Breast epithelium (tissue), 4 donors: ENCODE measurements at regions of chr7 and their contacts with region 1.

Region 1: GRCh38 chr7:119392-120163 is 72.8 kb upstream of the FAM20C start:
- DNase-seq: no peak
- H3K4me3 ChIP-seq: no peak overlapping the region
- H3K27ac ChIP-seq: peak overlapping the region; percentile 0 to 67
- H3K4me1 ChIP-seq: no peaks in the 10 kb centered on the region
- H3K27me3 ChIP-seq: no peaks in the 10 kb centered on the region
- CTCF ChIP-seq: no peak
- POLR2A ChIP-seq: no peak

Region 2: DNA sequence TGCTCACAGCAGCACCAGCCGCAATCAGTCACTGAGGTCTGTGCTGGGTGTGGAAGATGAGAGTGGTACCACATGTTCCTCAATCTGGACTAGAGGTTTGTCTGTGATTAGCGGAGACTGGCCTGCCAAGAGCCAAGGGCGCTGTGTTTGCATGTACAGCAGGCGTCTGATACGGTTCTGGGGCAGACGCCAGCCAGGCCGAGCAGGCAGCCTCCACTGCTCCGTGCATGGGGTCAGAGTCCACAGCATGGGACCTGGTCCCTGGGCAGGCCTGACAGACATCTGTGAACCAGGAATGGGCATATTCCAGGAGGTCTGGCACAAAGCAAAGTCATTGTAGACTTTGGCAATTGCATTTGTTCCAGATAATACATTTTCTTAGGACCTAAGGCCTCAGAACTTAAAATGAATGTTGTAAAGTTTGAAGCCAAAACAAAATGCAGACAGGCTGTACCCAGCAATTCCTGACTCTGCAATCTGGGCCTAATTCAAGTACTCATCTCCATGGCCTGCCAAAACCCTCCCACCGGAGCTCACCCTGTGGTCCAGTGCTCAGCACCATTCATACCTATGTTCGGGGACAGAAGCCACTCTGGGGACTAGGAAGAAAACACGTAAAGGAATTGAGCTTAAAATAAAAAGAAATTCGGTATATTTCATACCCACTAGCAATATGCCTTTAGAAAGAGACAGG is 22.8 kb after region 1 on chr7:
- intact Hi-C with region 1: no loop called
- DNase-seq: peak in 1 of 2 donors; percentile 15
- H3K4me3 ChIP-seq: no peak overlapping the region
- H3K27ac ChIP-seq: peak overlapping the region in 1 of 2 donors; percentile 60
- H3K4me1 ChIP-seq: no peaks in the 10 kb centered on the region
- H3K27me3 ChIP-seq: no peaks in the 10 kb centered on the region
- CTCF ChIP-seq: no peak
- POLR2A ChIP-seq: no peak

Region 3: DNA sequence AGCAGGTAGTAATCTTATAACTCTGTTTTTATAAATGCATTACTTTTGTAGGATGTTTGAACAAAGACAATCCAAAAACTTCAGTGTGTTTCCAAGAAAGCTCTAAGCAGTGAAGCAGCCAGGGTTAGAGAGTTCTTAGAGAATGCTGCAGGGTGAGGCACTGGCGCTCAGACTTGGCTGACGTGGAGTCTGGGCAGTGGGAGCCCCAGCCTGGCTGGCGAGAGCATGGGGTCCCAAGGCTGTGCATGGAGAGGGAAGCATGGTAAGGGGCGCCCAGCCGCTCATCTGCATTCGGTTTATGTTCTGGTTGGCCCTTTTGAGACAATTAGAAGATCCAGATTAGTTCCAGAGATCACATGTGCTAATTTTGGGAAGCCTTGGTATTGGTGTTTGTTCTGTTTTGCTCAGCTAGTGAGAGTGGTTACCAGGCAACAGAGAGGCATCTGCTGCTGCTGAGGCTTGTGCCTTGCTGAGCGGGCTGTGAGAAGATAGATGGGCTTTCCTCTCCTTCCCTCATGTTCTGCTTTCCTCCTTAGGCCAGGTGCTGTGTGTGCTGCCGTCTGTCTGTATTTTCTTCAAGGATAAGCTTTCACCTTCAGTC is 723.0 kb after region 1 on chr7:
- intact Hi-C with region 1: loop called (anchors 5 kb)
- DNase-seq: no peak
- H3K4me3 ChIP-seq: no peak overlapping the region
- H3K27ac ChIP-seq: no peak overlapping the region
- H3K4me1 ChIP-seq: no peaks in the 10 kb centered on the region
- H3K27me3 ChIP-seq: no peaks in the 10 kb centered on the region
- CTCF ChIP-seq: no peak
- POLR2A ChIP-seq: no peak